Tibial artery (tissue), 4 donors: ENCODE measurements at regions of chr21 and their contacts with region 1.

Region 1: DNA sequence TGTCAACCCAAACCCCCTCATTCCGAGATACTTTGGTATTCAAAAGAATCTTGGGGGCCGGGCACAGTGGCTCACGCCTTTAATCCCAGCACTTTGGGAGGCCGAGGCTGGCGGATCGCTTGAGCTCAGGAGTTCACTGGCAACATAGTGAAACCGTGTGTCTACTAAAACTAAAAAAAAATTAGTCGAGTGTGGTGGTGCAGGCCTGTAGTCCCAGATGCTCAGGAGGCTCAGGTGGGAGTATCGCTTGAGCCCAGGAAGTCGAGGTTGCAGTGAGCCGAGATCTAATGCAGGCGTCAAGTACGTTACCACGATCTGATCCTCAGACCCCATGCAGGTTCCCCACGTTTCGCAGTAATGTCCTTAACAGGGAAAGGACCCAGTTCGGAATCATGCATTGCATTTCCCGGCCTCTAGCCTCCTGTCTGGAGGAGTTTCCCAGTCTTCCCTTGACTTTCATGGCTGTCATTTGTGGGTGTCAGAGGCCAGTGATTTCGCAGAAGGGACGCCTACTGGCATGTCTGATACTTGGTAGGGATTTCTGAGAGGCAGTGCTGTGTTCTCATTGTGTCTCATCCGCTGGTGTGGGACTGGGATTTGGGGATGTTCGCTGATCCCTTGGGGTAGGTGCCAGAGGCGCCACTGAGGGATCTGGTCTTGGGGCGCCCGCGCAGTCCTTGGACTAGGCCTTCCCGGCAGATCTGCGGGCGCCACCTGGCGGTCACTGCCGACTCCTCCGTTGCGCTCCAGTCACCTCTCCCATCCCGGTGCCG is 39.3 kb upstream of the HMGN1 start:
- DNase-seq: peak; percentile 87 to 93
- H3K4me3 ChIP-seq: peak overlapping the region; percentile 43 to 56
- H3K27ac ChIP-seq: peak overlapping the region; percentile 58 to 74
- H3K4me1 ChIP-seq: peaks cover 0 to 39% (median 26%) of the 10 kb centered on the region in 4 donors
- H3K27me3 ChIP-seq: no peaks in the 10 kb centered on the region
- CTCF ChIP-seq: peak; percentile 88 to 93

Region 2: GRCh38 chr21:39183237-39184007 is 204.8 kb before region 1 on chr21 and contains the start of gene PSMG1:
- intact Hi-C with region 1: loop called (anchors 10 kb)
- DNase-seq: peak; percentile 93 to 97
- H3K4me3 ChIP-seq: peak within 1 kb of the TSS; percentile 73 to 90
- H3K27ac ChIP-seq: peak within 1 kb of the TSS; percentile 88 to 90
- H3K4me1 ChIP-seq: peaks cover 0 to 24% (median 8%) of the 10 kb centered on the region in 4 donors
- H3K27me3 ChIP-seq: no peaks in the 10 kb centered on the region
- CTCF ChIP-seq: no peak

Region 3: DNA sequence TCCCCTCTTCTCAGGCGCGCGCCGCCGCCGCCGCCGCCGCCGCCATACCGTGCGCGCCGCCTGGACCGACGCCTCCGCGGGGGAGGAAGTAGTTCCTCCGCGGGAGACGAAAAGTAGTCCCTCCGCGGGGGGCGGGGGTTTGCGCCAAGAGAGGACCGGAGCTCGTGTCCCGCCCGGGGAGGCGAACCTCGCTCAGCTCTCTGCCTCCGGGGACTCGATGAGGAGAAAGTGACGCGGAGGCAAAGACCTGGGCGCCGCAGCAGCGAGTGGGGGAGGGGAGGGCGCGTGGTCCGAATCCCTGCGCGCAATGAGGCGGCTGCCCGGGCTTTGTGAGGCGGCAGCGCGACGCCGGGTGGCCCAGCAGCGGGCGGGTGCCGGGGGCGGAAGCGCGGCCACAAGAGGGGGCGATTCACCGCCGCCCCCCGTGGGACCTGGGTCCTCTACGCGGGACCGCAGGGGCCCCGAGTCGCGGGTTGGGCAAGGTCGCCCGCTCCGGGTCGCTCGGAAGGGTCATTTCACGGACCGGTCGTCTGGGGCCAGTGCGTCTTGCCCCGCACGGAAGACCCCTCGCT is 74.6 kb before region 1 on chr21 and contains the start of gene BRWD1:
- intact Hi-C with region 1: loop called (anchors 2 kb)
- DNase-seq: peak; percentile 66 to 88
- H3K4me3 ChIP-seq: peak within 1 kb of the TSS; percentile 95 to 98
- H3K27ac ChIP-seq: peak within 1 kb of the TSS; percentile 96 to 98
- H3K4me1 ChIP-seq: peaks cover 0 to 17% (median 5%) of the 10 kb centered on the region in 4 donors
- H3K27me3 ChIP-seq: no peaks in the 10 kb centered on the region
- CTCF ChIP-seq: peak; percentile 25 to 35

Region 4: GRCh38 chr21:39349211-39350093 is 38.8 kb before region 1 on chr21:
- intact Hi-C with region 1: loop called (anchors 2 kb)
- DNase-seq: peak; percentile 91 to 95
- H3K4me3 ChIP-seq: peak overlapping the region; percentile 68 to 76
- H3K27ac ChIP-seq: peak overlapping the region; percentile 82 to 85
- H3K4me1 ChIP-seq: peaks cover 0 to 24% (median 10%) of the 10 kb centered on the region in 4 donors
- H3K27me3 ChIP-seq: no peaks in the 10 kb centered on the region
- CTCF ChIP-seq: no peak

Region 5: GRCh38 chr21:39430457-39430856 is 42.2 kb after region 1 on chr21:
- intact Hi-C with region 1: no loop called
- DNase-seq: no peak
- H3K4me3 ChIP-seq: no peak overlapping the region
- H3K27ac ChIP-seq: no peak overlapping the region
- H3K4me1 ChIP-seq: no peaks in the 10 kb centered on the region
- H3K27me3 ChIP-seq: no peaks in the 10 kb centered on the region
- CTCF ChIP-seq: no peak

Region 6: GRCh38 chr21:39445321-39446269 is 57.4 kb after region 1 on chr21 and contains the start of gene LCA5L:
- intact Hi-C with region 1: loop called (anchors 10 kb)
- DNase-seq: peak; percentile 86 to 93
- H3K4me3 ChIP-seq: peak within 1 kb of the TSS; percentile 83 to 86
- H3K27ac ChIP-seq: peak within 1 kb of the TSS; percentile 85 to 91
- H3K4me1 ChIP-seq: peaks cover 0 to 17% (median 8%) of the 10 kb centered on the region in 4 donors
- H3K27me3 ChIP-seq: no peaks in the 10 kb centered on the region
- CTCF ChIP-seq: no peak